T-cell (primary cell): ENCODE measurements at regions of chr13 and their contacts with region 1.

Region 1: DNA sequence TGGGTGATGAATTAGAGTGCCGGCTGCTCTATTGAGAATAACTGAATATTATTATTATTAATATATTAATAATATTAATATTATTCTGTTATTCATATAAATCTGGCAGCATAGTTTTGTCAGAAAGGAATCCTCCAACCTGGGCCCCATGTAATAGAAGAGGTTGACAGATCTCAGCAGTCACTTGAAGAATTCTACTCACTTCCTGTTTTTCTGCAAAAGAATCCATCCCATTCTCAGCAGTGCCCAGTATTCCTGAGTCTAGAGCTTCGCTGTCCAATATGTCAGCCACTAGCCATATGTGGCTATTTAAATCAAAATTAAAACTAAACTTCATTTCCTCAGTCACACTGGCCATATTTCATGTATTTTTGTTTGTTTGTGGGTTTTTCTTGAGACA is 72.4 kb upstream of the USPL1 start:
- DNase-seq: no peak
- ATAC-seq: no peak
- H3K4me3 ChIP-seq: no peak overlapping the region
- H3K4me3 Mint-ChIP-seq: no peak overlapping the region
- H3K27ac ChIP-seq: no peak overlapping the region
- H3K27ac Mint-ChIP-seq: no peak overlapping the region
- H3K4me1 ChIP-seq: no peaks in the 10 kb centered on the region
- H3K4me1 Mint-ChIP-seq: no peaks in the 10 kb centered on the region
- H3K27me3 ChIP-seq: peaks cover 0 to 10% of the 10 kb centered on the region in 2 experiments
- H3K27me3 Mint-ChIP-seq: peaks cover 0 to 6% of the 10 kb centered on the region in 2 donors

Region 2: GRCh38 chr13:30408319-30409101 is 136.8 kb before region 1 on chr13:
- CTCF ChIA-PET with region 1: interaction called in 1 of 2 experiments, 12 read pairs
- POLR2A ChIA-PET with region 1: no interaction called
- DNase-seq: peak; percentile 79 to 94 (median 88)
- ATAC-seq: peak; percentile 93 to 97 (median 94)
- H3K4me3 ChIP-seq: peak overlapping the region in 1 of 2 donors; percentile 33
- H3K4me3 Mint-ChIP-seq: peak overlapping the region; percentile 58 to 71 (median 61)
- H3K27ac ChIP-seq: peak overlapping the region; percentile 75
- H3K27ac Mint-ChIP-seq: peak overlapping the region; percentile 79 to 91
- H3K4me1 ChIP-seq: peaks cover 3 to 17% of the 10 kb centered on the region in 2 experiments
- H3K4me1 Mint-ChIP-seq: peaks cover 37 to 42% (median 38%) of the 10 kb centered on the region in 3 donors
- H3K27me3 ChIP-seq: no peaks in the 10 kb centered on the region
- H3K27me3 Mint-ChIP-seq: no peaks in the 10 kb centered on the region

Region 3: GRCh38 chr13:30708541-30708940 is 163.2 kb after region 1 on chr13:
- CTCF ChIA-PET with region 1: no interaction called
- POLR2A ChIA-PET with region 1: no interaction called
- DNase-seq: no peak
- ATAC-seq: no peak
- H3K4me3 ChIP-seq: no peak overlapping the region
- H3K4me3 Mint-ChIP-seq: no peak overlapping the region
- H3K27ac ChIP-seq: no peak overlapping the region
- H3K27ac Mint-ChIP-seq: no peak overlapping the region
- H3K4me1 ChIP-seq: no peaks in the 10 kb centered on the region
- H3K4me1 Mint-ChIP-seq: peaks cover 0 to 5% (median 0%) of the 10 kb centered on the region in 3 donors
- H3K27me3 ChIP-seq: peaks cover 0 to 8% of the 10 kb centered on the region in 2 experiments
- H3K27me3 Mint-ChIP-seq: no peaks in the 10 kb centered on the region